ENCODE measurements at regions of chr9 and their contacts with region 1.

Region 1: DNA sequence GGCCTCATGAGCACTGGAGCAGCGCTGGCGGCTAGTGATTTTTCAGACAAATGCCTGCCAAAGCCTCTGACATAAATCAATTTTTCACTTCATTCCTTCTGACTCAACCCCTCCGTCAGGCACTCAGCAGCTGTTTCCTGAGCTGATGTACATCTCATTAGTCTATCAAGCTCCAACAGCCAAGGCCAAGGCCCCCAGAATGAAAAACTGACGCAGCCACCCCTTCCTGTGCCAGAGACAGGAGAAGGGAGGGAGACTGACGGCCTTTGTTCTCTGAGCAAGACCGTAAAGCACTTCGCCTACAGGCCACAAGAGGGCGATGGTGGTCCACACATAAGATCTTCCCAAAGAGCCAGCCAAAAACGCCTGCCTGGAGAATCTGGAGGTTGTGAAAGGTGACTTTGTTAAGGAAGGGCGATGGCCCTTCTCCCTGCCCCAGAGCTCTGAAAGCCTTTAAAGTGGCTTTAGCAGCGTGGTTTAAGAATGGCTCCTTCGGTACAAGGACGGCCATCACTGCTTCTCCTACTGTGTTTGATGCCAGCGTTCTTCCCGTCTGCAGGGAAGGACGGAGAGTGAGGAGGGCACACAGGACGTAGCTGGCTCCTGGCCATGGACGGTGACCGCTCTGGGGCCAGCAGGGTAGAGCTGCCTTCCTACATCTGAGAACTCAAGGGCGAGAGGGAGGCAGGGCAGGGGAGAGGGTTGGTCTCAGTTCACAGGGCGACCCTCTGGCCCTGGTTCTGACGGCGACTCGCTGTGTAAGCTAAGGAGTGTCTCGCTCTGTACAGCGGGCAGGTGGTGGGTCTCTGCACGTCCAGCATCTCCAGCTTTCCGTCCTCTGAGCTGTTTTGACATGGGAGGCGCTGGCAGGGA is 37.0 kb downstream of the ALG2 start:
- DNase-seq: peak; percentile 81
- H3K4me3 ChIP-seq: peak overlapping the region; percentile 38
- H3K27ac ChIP-seq: no peak overlapping the region
- H3K27me3 ChIP-seq: peaks cover 10% of the 10 kb centered on the region
- CTCF ChIP-seq: peak; percentile 97

Region 2: GRCh38 chr9:99140685-99141314 is 43.9 kb before region 1 on chr9:
- CTCF ChIA-PET with region 1: no interaction called
- POLR2A ChIA-PET with region 1: no interaction called
- DNase-seq: peak; percentile 34
- H3K4me3 ChIP-seq: no peak overlapping the region
- H3K27ac ChIP-seq: no peak overlapping the region
- H3K27me3 ChIP-seq: no peaks in the 10 kb centered on the region
- CTCF ChIP-seq: peak; percentile 92

Region 3: GRCh38 chr9:99162759-99163364 is 21.8 kb before region 1 on chr9:
- CTCF ChIA-PET with region 1: interaction called, 13 read pairs
- POLR2A ChIA-PET with region 1: no interaction called
- DNase-seq: no peak
- H3K4me3 ChIP-seq: no peak overlapping the region
- H3K27ac ChIP-seq: no peak overlapping the region
- H3K27me3 ChIP-seq: peaks cover 12% of the 10 kb centered on the region
- CTCF ChIP-seq: peak; percentile 68

Region 4: GRCh38 chr9:99173570-99174504 is 10.9 kb before region 1 on chr9:
- CTCF ChIA-PET with region 1: interaction called, 30 read pairs
- POLR2A ChIA-PET with region 1: no interaction called
- DNase-seq: no peak
- H3K4me3 ChIP-seq: no peak overlapping the region
- H3K27ac ChIP-seq: no peak overlapping the region
- H3K27me3 ChIP-seq: peaks cover 10% of the 10 kb centered on the region
- CTCF ChIP-seq: no peak

Region 5: GRCh38 chr9:99216073-99216472 is 31.4 kb after region 1 on chr9:
- CTCF ChIA-PET with region 1: interaction called, 12 read pairs
- POLR2A ChIA-PET with region 1: interaction called, 4 read pairs
- DNase-seq: no peak
- H3K4me3 ChIP-seq: no peak overlapping the region
- H3K27ac ChIP-seq: no peak overlapping the region
- H3K27me3 ChIP-seq: no peaks in the 10 kb centered on the region
- CTCF ChIP-seq: no peak

Region 6: DNA sequence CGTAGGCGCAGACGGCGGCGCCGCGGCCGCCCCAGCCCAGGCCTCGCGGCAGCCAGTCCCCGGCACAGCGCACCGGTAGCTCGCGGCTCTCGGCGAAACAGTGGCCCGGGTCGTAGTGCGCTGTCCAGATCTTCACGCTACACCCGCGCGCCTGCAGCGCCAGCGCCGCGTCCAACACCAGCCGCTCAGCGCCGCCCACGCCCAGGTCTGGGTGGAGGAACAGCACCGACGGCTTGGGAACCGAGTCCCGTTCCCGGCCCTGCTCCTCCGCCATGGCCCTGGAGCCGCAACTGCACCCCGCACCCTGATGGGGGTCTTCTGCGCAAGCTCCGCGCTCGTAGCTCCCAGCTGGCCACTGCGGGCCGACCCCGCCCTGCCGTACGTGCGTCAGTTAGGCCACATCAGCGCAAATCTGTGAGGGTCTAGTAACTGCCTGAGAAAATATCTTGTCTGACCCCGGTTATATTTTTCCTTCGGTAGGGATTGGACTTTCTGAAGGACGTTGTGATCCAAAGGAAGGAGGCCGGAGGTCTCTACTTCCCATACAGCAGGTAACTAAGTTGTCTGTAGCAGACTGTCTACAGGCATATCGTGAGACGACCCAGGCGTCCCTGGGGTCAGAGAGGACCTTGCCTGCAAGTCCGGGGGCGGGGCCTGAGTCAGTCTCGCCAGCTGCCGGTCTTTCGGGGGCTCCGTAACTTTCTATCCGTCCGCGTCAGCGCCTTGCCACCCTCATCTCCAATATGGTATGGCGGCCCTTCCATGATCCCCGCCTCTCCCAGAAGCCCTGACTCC is 37.1 kb after region 1 on chr9 and contains the starts of genes ALG2 and SEC61B:
- CTCF ChIA-PET with region 1: interaction called, 14 read pairs
- POLR2A ChIA-PET with region 1: interaction called, 4 read pairs
- DNase-seq: peak; percentile 91
- H3K4me3 ChIP-seq: peak within 1 kb of the TSS; percentile 98
- H3K27ac ChIP-seq: peak within 1 kb of the TSS; percentile 99
- H3K27me3 ChIP-seq: no peaks in the 10 kb centered on the region
- CTCF ChIP-seq: no peak
- polyA plus RNA-seq, gene ALG2: 55.0 and 61.6 TPM in 2 replicates
- polyA plus RNA-seq, gene SEC61B: 207 and 221 TPM in 2 replicates

Region 7: GRCh38 chr9:99231711-99232110 is 47.0 kb after region 1 on chr9:
- CTCF ChIA-PET with region 1: interaction called, 15 read pairs
- POLR2A ChIA-PET with region 1: no interaction called
- DNase-seq: no peak
- H3K4me3 ChIP-seq: no peak overlapping the region
- H3K27ac ChIP-seq: no peak overlapping the region
- H3K27me3 ChIP-seq: no peaks in the 10 kb centered on the region
- CTCF ChIP-seq: peak; percentile 61

Measured in AG04450 (cell line).